AG04450 (cell line): ENCODE measurements at regions of chr3 and their contacts with region 1.

Region 1: DNA sequence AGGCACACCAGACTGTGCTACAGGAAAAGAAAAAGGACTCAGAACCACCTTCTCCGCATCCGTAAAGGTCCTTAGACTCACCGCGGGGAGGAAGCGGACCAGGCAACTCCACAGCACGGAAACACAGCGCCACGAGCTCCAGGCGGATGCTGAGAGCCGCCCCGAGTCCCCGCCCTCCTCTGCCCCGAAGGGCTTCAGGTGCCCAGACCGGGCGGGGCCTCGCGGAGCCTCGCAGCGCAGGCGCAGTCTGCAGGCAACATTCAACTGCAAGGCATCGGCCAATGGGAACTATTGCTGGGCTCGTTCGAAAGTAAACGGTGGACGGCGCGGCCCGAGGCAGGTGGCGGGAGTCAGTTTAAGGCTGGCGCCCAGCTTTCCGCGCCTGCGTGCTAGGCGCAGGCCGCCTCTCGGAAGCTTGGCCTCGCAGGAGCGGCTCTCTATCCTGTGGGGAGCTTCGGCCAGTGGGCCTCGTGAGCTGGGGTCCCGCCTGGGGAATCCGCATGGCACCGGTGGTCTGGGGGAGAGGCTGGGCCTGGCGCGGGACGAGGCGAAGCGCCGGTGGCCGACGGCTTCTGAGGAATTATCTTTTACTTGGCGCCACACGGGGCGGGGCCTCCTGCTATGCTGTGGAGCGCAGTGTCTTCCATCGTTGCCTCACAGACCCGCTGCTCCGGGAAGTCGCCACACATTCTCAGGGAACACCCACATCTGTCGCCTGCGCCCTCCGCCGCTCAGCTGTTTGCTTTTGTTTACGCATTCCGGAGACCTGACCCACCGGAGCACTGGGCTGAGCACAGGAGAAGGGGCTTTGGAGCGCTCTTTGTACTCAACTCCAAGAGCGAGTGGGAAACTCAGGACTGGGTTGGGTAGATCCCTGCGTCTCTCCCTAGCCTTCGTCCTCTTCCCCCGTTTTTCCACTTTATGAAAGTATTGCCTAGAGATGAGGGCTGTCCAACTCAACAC is at the start of gene TRIM59:
- DNase-seq: peak; percentile 96
- H3K4me3 ChIP-seq: peak within 1 kb of the TSS; percentile 87
- H3K27ac ChIP-seq: peak within 1 kb of the TSS; percentile 93
- H3K27me3 ChIP-seq: no peaks in the 10 kb centered on the region
- CTCF ChIP-seq: 0 out of 2 replicates have a peak, but pooled peaks have one; percentile 8
- polyA plus RNA-seq, gene TRIM59: 10.9 and 15.3 TPM in 2 replicates

Region 2: DNA sequence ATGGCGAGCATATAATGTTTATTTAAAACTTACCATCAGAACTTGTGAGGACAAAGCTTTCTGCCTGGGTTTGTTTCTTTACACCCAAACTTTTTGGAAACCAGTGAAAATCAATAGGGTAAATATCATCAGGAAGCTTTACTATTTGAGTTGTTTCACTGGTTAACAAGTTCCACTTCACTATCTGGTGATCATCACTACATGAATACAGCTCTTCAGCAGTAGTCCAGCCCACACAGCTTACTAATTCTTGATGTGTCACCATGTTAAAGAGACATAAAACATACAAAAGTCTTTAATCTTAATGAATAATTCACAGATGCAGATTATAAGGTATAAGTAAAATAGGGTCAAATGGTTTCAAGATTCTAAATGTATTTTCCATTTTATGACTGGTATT is 68.4 kb before region 1 on chr3:
- CTCF ChIA-PET with region 1: no interaction called
- POLR2A ChIA-PET with region 1: no interaction called
- DNase-seq: no peak
- H3K4me3 ChIP-seq: no peak overlapping the region
- H3K27ac ChIP-seq: no peak overlapping the region
- H3K27me3 ChIP-seq: no peaks in the 10 kb centered on the region
- CTCF ChIP-seq: no peak

Region 3: GRCh38 chr3:160473978-160474377 is 24.1 kb after region 1 on chr3:
- CTCF ChIA-PET with region 1: no interaction called
- POLR2A ChIA-PET with region 1: interaction called, 14 read pairs
- DNase-seq: peak; percentile 88
- H3K4me3 ChIP-seq: no peak overlapping the region
- H3K27ac ChIP-seq: peak overlapping the region; percentile 69
- H3K27me3 ChIP-seq: no peaks in the 10 kb centered on the region
- CTCF ChIP-seq: no peak

Region 4: GRCh38 chr3:160486459-160486869 is 36.5 kb after region 1 on chr3:
- CTCF ChIA-PET with region 1: interaction called, 21 read pairs
- POLR2A ChIA-PET with region 1: interaction called, 6 read pairs
- DNase-seq: no peak
- H3K4me3 ChIP-seq: no peak overlapping the region
- H3K27ac ChIP-seq: no peak overlapping the region
- H3K27me3 ChIP-seq: no peaks in the 10 kb centered on the region
- CTCF ChIP-seq: peak; percentile 54

Region 5: GRCh38 chr3:160637081-160637480 is 187.2 kb after region 1 on chr3:
- CTCF ChIA-PET with region 1: no interaction called
- POLR2A ChIA-PET with region 1: no interaction called
- DNase-seq: no peak
- H3K4me3 ChIP-seq: no peak overlapping the region
- H3K27ac ChIP-seq: no peak overlapping the region
- H3K27me3 ChIP-seq: no peaks in the 10 kb centered on the region
- CTCF ChIP-seq: no peak

Region 6: DNA sequence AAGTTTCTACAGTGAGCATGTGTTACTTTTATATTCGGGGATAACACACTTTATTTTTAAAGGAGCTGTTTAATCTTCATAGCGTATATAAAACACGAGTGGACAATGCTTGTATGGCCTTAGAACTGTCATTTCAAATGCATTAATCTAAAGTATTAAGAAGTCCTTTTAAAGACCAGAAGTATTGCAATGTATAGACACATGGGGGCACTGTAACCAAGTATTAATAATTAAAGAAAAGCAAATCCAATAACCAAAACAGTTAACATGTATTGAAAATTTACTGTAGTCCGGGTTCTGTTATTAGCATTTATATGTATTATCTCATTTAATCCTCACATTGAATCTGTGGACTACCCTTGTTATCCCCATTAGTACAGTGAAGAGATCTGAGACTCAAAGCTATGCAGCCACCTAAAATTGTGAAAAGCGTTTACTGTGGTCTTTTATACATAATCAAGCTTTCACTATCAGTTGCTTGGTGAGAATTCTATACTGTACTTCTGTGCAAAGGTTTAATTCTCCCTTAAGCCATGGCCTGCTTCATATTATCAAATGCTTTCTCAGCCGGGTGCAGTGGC is 237.1 kb after region 1 on chr3:
- CTCF ChIA-PET with region 1: no interaction called
- POLR2A ChIA-PET with region 1: no interaction called
- DNase-seq: no peak
- H3K4me3 ChIP-seq: no peak overlapping the region
- H3K27ac ChIP-seq: no peak overlapping the region
- H3K27me3 ChIP-seq: no peaks in the 10 kb centered on the region
- CTCF ChIP-seq: peak; percentile 53

Region 7: DNA sequence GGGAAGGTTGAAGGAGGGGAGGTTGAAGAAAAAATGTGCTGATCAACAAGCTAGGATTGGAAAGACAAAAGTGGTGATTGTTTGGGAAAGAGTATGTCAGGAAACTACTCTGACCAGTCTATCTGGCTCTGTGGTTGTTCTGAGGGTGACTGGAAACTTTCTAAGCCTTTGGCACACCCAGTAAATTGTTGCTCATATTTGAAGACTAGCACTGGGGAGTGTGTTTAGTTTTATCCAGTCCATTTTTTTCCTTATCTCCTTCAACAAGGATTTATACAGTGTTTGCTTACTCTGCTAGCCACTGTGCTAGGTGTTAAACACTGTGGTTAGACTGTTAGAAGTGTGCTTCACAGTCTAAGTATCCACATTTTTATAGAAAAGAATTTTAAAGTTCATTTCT is 334.9 kb after region 1 on chr3:
- CTCF ChIA-PET with region 1: no interaction called
- POLR2A ChIA-PET with region 1: no interaction called
- DNase-seq: no peak
- H3K4me3 ChIP-seq: no peak overlapping the region
- H3K27ac ChIP-seq: no peak overlapping the region
- H3K27me3 ChIP-seq: no peaks in the 10 kb centered on the region
- CTCF ChIP-seq: no peak